ENCODE measurements at regions of chr11 and their contacts with region 1.

Region 1: GRCh38 chr11:95799546-95799945 is 9.2 kb downstream of the CEP57 start:
- DNase-seq: no peak
- ATAC-seq: no peak
- H3K4me3 Mint-ChIP-seq: no peak overlapping the region
- H3K27ac Mint-ChIP-seq: no peak overlapping the region
- H3K4me1 Mint-ChIP-seq: peaks cover 5% of the 10 kb centered on the region
- H3K27me3 Mint-ChIP-seq: no peaks in the 10 kb centered on the region
- CTCF ChIP-seq: no peak

Region 2: DNA sequence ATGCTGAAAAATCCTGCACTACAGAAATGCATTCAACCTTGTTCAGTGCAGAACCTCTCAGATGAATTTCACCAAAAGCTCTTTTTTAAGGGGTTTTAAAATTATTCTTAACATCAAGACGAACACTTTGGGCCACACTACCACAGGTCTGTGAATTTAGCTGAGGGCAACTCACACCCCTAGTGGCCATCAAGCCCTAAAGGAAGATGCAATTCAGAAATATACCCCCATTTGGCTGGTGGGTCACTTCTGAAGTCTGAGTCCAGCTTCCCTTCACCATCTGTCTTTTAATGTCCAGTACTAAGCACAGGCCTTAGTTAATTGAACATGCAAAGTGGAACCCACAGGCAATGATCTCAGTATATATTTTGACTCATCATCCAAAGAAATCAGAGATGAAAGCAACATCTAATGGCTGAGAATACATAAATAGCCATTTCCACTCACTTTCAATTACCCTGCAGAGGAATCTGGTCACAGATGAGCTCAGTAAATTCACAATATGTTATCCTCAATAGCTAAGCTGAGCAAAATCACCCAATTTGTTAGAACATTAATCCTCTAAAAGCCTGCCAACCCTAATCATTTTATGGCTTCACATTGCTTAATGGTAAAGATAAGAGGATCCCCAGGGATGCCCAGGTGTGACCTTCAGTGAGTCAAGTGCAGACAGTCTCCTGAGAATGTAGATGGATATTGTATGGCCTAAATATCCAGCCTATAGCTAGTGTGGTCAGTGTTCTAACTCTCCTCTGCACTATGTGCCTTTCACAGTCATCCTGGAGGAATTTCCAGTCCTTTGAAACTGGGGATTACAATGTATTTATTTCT is 60.2 kb before region 1 on chr11:
- CTCF ChIA-PET with region 1: no interaction called
- POLR2A ChIA-PET with region 1: no interaction called
- intact Hi-C with region 1: no loop called
- DNase-seq: no peak
- ATAC-seq: peak; percentile 21
- H3K4me3 Mint-ChIP-seq: no peak overlapping the region
- H3K27ac Mint-ChIP-seq: no peak overlapping the region
- H3K4me1 Mint-ChIP-seq: peaks cover 12% of the 10 kb centered on the region
- H3K27me3 Mint-ChIP-seq: no peaks in the 10 kb centered on the region
- CTCF ChIP-seq: no peak

Region 3: GRCh38 chr11:95816037-95816436 is 16.5 kb after region 1 on chr11:
- CTCF ChIA-PET with region 1: no interaction called
- POLR2A ChIA-PET with region 1: no interaction called
- intact Hi-C with region 1: loop called (anchors 2 kb)
- DNase-seq: no peak
- ATAC-seq: peak; percentile 94
- H3K4me3 Mint-ChIP-seq: no peak overlapping the region
- H3K27ac Mint-ChIP-seq: peak overlapping the region; percentile 64
- H3K4me1 Mint-ChIP-seq: peaks cover 8% of the 10 kb centered on the region
- H3K27me3 Mint-ChIP-seq: no peaks in the 10 kb centered on the region
- CTCF ChIP-seq: no peak

Measured in activated B cell treated with CpG ODN at 0.5 μM for 24 hours (primary cell).